GM10248 (cell line): ENCODE measurements at regions of chr7 and their contacts with region 1.

Region 1: DNA sequence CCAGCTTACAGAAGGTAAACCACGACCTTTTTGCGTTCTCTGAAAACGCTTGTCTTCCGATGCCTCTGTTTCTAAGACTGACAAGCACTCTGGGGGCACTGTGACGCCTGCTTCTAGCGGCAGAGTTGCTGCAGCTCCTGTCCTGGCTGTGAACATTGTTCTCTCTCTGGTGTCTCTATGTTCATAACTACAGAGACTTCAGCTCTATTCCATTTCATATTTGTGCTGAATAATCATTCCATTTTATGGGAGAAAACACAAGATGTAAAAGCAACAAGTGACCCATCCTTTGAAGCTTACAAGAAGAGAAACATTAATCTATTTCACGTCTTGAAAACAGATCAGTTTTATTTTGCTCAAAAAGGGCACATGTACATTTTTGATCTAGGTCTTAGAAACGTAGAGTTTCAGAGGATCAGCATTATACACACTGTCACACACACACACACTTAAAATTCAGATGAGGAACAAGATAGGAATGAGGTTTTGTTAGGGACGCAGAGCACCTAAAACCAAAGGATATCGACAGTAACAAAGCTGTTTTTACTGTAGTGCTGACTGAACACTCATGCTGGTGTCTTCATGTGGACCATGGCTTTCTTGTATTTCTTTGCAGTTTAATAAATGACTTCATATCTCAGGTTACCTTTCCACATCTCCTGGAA is 3.0 kb downstream of the IKZF1 start:
- DNase-seq: no peak
- CTCF ChIP-seq: no peak

Region 2: DNA sequence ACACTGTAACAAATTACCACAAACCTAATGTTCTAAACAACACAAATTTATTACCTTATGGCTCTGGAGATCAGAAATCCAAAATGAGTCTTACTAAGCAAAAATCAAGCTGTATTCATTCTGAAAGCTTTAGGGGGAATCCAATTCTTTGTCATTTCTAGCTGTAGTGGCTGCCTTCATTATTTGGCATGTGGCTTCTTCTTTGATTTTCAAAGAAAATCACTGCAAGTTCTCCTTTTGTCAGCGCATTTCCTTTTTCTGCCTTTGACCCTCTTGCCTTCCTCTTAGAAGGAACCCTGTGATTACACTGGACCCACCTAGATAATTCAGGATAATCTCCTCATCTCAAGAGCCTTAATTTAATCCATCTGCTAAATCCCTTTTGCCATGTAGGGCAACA is 251.4 kb before region 1 on chr7:
- CTCF ChIA-PET with region 1: no interaction called
- POLR2A ChIA-PET with region 1: no interaction called
- DNase-seq: no peak
- CTCF ChIP-seq: no peak

Region 3: GRCh38 chr7:50272808-50273207 is 34.7 kb before region 1 on chr7:
- CTCF ChIA-PET with region 1: interaction called, 14 read pairs
- POLR2A ChIA-PET with region 1: no interaction called
- DNase-seq: no peak
- CTCF ChIP-seq: no peak

Region 4: GRCh38 chr7:50293509-50294179 is 13.9 kb before region 1 on chr7:
- CTCF ChIA-PET with region 1: interaction called, 95 read pairs
- POLR2A ChIA-PET with region 1: interaction called, 3 read pairs
- DNase-seq: no peak
- CTCF ChIP-seq: no peak

Region 5: GRCh38 chr7:50335795-50336754 is 28.6 kb after region 1 on chr7:
- CTCF ChIA-PET with region 1: interaction called, 13 read pairs
- POLR2A ChIA-PET with region 1: no interaction called
- DNase-seq: no peak
- CTCF ChIP-seq: peak; percentile 29